ENCODE measurements at regions of chr5 and their contacts with region 1.

Region 1: GRCh38 chr5:159294921-159295320 is 31.8 kb downstream of the UBLCP1 start:
- DNase-seq: no peak
- H3K4me3 ChIP-seq: no peak overlapping the region
- H3K27ac ChIP-seq: no peak overlapping the region
- H3K4me1 ChIP-seq: no peaks in the 10 kb centered on the region
- H3K27me3 ChIP-seq: no peaks in the 10 kb centered on the region
- CTCF ChIP-seq: no peak

Region 2: GRCh38 chr5:158162026-158162425 is 1132.9 kb before region 1 on chr5:
- CTCF ChIA-PET with region 1: interaction called, 12 read pairs
- POLR2A ChIA-PET with region 1: no interaction called
- intact Hi-C with region 1: no loop called
- DNase-seq: peak; percentile 10
- H3K4me3 ChIP-seq: no peak overlapping the region
- H3K27ac ChIP-seq: no peak overlapping the region
- H3K4me1 ChIP-seq: no peaks in the 10 kb centered on the region
- H3K27me3 ChIP-seq: no peaks in the 10 kb centered on the region
- CTCF ChIP-seq: no peak

Region 3: DNA sequence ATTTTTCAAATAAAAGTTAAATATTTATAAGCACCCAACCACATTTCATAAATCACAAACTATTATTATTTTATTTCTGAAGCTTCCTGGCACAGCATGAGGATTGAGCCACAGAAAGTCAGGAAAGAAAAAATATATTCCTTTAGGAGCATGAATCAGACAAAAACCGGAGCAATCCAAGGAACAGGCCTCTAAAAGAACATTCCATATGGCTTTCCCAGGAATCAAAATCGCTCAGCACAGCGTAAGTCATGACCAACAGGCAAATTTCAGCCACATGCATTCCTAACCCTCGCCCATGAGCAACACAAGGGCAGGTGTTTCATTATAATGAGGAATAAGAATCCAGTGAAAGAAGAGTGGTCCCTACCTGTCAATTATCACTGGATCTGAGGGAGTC is 221.9 kb before region 1 on chr5:
- CTCF ChIA-PET with region 1: no interaction called
- POLR2A ChIA-PET with region 1: no interaction called
- intact Hi-C with region 1: no loop called
- DNase-seq: no peak
- H3K4me3 ChIP-seq: no peak overlapping the region
- H3K27ac ChIP-seq: no peak overlapping the region
- H3K4me1 ChIP-seq: no peaks in the 10 kb centered on the region
- H3K27me3 ChIP-seq: no peaks in the 10 kb centered on the region
- CTCF ChIP-seq: no peak